Activated B cell treated with CpG ODN at 0.5 μM for 24 hours (primary cell): ENCODE measurements at regions of chr2 and their contacts with region 1.

Region 1: DNA sequence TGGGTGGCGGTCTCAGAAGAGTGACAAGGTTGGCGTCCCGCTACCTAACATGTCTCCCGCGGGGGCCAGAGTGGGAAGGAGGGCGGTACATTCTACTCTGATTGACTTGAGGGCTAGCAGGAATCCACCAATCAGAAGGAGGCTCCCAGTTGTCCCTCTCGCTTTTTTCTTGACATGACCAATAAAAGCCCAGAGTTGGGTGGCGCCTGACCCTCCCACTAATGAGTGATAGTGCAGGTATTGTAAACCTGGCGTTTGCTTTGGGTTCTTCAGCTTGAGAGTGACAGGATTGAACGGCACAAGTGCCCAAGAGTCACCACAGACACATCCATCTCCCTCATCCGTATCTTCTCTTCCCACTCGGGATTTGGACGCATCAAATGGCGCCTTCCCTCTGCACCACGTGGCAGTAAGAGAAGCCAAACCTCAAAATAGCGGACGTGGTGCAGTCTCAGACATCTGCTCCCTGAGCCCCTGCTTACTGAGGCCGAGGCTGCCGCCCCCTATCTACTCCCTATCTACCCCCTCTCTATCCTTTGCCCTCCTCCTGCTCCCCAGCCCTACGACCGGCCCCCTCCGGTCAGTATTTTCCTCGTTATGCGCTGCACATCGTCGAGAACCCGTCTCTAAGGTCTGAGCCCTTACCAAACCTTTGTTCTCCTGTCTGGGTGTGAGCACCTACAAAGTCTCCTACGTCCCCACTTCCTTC is 768 bp upstream of the FAM161A start:
- DNase-seq: peak; percentile 69
- ATAC-seq: peak; percentile 86
- H3K4me3 Mint-ChIP-seq: peak overlapping the region; percentile 94
- H3K27ac Mint-ChIP-seq: peak overlapping the region; percentile 95
- H3K4me1 Mint-ChIP-seq: peaks cover 19% of the 10 kb centered on the region
- H3K27me3 Mint-ChIP-seq: no peaks in the 10 kb centered on the region
- CTCF ChIP-seq: no peak

Region 2: DNA sequence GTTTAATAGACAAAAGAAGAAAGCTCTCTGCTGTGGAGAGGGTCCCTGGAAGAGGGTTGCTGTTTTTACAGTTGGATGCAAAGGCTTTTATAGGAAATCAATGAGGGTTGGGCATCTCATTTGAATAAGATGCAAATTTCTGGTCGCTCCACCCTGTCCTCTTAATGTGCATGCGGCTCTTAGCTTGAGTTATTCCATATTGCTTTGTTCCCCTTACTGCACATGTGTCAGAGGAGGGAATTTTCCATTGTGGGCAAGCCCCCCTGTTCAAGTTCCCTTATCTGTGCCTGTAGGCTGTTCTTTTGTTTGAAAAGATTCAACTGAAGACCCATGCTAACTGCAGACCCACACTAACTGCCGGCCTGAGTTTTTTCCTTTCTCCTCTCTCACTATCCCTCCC is 1627.6 kb before region 1 on chr2:
- CTCF ChIA-PET with region 1: no interaction called
- POLR2A ChIA-PET with region 1: interaction called, 11 read pairs
- intact Hi-C with region 1: no loop called
- DNase-seq: no peak
- ATAC-seq: no peak
- H3K4me3 Mint-ChIP-seq: no peak overlapping the region
- H3K27ac Mint-ChIP-seq: no peak overlapping the region
- H3K4me1 Mint-ChIP-seq: peaks cover 27% of the 10 kb centered on the region
- H3K27me3 Mint-ChIP-seq: no peaks in the 10 kb centered on the region
- CTCF ChIP-seq: no peak

Region 3: DNA sequence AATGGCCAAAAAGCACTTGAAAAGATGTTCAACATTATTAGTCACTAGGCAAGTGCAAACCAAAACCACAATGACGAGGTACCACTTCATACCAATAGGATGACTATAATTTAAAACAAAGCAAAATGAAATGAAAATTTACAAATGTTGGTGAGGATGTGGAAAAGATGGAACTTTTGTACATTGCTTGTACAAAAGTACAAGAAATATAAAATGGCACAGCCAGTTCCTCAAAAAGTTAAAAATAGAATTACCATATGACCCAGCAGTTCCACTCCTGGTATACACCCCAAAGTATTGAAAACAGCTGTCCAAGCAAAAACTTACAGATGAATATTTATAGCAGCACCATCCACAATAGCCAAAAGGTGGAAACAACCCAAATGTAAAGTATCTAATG is 208.7 kb before region 1 on chr2:
- CTCF ChIA-PET with region 1: no interaction called
- POLR2A ChIA-PET with region 1: no interaction called
- intact Hi-C with region 1: no loop called
- DNase-seq: no peak
- ATAC-seq: no peak
- H3K4me3 Mint-ChIP-seq: no peak overlapping the region
- H3K27ac Mint-ChIP-seq: no peak overlapping the region
- H3K4me1 Mint-ChIP-seq: no peaks in the 10 kb centered on the region
- H3K27me3 Mint-ChIP-seq: no peaks in the 10 kb centered on the region
- CTCF ChIP-seq: no peak

Region 4: GRCh38 chr2:61816480-61817355 is 37.9 kb before region 1 on chr2:
- CTCF ChIA-PET with region 1: no interaction called
- POLR2A ChIA-PET with region 1: no interaction called
- intact Hi-C with region 1: no loop called
- DNase-seq: no peak
- ATAC-seq: no peak
- H3K4me3 Mint-ChIP-seq: no peak overlapping the region
- H3K27ac Mint-ChIP-seq: no peak overlapping the region
- H3K4me1 Mint-ChIP-seq: no peaks in the 10 kb centered on the region
- H3K27me3 Mint-ChIP-seq: peaks cover 5% of the 10 kb centered on the region
- CTCF ChIP-seq: no peak